ENCODE measurements at regions of chr3 and their contacts with region 1.

Region 1: DNA sequence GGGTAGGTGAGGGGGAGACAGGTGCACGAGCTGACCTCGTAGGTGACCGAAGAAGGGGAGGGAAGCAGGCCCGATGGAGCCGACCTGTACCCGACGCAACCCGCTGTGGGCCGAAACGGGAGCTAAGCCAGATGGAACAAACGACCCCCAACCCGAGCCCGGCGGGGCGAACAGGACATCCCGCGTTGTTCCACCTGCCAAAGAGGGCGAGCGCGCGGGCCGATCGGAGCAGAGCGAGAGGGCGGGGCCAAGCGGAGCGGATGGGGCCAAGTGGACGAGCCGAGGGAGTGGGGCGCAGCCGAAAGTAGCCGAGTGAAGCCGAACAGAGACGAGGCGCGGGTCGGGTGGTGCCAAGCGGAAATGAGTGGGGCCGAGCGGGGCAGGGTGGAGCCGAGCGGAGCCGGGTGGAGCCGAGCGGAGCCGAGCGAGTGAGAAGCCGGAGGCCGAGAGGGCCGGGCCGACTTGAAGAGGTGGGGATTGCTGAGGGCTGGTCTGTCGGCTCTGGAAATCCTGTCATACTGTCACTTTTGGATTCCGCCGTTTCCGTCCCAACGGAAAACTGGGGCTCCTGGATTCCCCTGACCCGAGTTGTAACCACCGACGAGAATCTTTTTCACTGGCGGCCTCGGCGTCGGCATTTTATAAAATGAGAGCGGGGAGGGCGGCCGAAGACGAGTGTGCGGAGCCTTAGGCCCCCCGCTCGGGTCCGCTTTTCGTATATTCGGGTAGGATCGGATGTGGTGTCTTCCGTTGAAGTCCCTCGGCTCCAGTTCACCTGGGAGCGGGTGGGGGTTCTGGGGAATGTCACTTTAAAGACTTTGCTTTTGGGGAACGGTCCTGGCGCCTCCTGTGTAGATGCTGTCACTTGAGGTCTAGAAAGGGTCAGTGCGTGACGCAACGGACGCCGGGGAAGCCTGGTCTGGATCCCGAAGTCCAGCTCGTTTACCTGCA is 15.6 kb upstream of the WNT7A start:
- DNase-seq: peak; percentile 75 to 95
- H3K4me3 ChIP-seq: peak overlapping the region; percentile 96
- H3K27ac ChIP-seq: no peak overlapping the region
- H3K4me1 ChIP-seq: peaks cover 17% of the 10 kb centered on the region
- H3K27me3 ChIP-seq: no peaks in the 10 kb centered on the region
- CTCF ChIP-seq: no peak

Region 2: DNA sequence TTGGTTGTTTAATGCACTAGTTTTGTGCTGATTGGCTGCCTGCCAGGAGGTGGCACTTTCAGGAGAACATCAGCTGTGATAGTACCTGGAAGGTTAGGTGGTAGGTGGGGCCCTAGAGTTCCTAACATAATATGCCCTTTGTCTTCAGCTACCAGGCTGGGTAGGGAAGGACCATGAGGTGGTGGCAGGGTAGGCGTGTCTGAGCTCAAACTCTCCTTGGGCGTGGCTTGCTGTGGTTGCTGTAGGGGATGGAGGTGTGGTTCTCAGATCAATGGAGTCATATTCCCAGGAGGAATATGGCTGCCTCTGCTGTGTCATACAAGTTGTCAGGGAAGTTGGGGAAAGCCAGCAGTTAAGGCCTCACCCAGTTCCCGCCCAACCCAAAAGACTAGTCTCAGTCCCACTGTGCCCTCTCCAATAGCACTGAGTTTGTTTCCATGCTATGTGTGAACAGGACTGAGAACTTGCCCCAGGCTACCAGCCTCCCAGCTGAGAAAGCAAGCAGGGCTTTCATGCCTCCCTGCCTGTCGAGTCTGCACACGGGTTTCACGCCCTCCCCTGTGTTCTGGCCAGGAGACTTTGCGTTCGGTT is 121.5 kb after region 1 on chr3:
- CTCF ChIA-PET with region 1: no interaction called
- POLR2A ChIA-PET with region 1: no interaction called
- intact Hi-C with region 1: loop called (anchors 5 kb)
- DNase-seq: peak; percentile 79 to 88
- H3K4me3 ChIP-seq: no peak overlapping the region
- H3K27ac ChIP-seq: 0 out of 2 replicates have a peak overlapping the region, but pooled peaks have one; percentile 24
- H3K4me1 ChIP-seq: peaks cover 7% of the 10 kb centered on the region; the same call in 1 of the 2 replicates
- H3K27me3 ChIP-seq: no peaks in the 10 kb centered on the region; the same call in 1 of the 2 replicates
- CTCF ChIP-seq: no peak

Region 3: DNA sequence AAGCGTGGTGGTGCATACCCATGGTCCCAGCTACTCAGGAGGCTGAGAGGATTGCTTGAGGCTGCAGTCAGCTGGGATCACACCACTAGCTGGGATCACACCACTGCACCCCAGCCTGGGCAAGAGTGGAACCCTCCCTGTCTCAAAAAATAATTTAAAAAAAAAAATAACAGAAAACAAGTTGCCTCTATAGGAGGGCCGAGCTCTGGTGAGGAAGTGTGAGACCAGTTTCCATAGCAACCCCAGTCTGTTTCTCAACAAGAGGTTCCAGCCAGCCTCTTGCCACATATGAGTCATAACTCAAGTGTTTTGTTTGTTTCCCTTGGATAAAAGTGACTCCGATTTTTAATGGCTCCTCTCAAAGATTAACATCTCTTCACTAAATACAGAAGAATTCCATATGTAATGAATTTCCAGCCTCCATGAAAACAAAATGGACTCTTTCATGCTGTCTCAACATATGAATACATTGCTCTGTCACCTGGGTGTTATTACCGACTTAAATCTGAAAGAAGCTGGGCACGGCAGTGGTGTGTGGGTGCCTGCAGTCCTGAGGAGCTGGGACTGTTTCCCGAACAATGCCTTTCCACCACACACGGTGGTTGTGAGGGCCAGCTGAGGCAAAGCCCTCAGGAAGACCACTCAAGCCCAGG is 249.1 kb after region 1 on chr3:
- CTCF ChIA-PET with region 1: interaction called, 3 read pairs
- POLR2A ChIA-PET with region 1: no interaction called
- intact Hi-C with region 1: loop called (anchors 1 kb)
- DNase-seq: peak; percentile 74 to 96
- H3K4me3 ChIP-seq: peak overlapping the region; percentile 51
- H3K27ac ChIP-seq: peak overlapping the region; percentile 88
- H3K4me1 ChIP-seq: peaks cover 44% of the 10 kb centered on the region
- H3K27me3 ChIP-seq: no peaks in the 10 kb centered on the region
- CTCF ChIP-seq: no peak

Region 4: GRCh38 chr3:14508961-14509795 is 613.7 kb after region 1 on chr3:
- CTCF ChIA-PET with region 1: no interaction called
- POLR2A ChIA-PET with region 1: no interaction called
- intact Hi-C with region 1: loop called (anchors 2 kb)
- DNase-seq: peak; percentile 44 to 68
- H3K4me3 ChIP-seq: no peak overlapping the region
- H3K27ac ChIP-seq: no peak overlapping the region
- H3K4me1 ChIP-seq: 0 out of 2 replicates have a peak, but pooled peaks cover 5% of the 10 kb centered on the region
- H3K27me3 ChIP-seq: 0 out of 2 replicates have a peak, but pooled peaks cover 5% of the 10 kb centered on the region
- CTCF ChIP-seq: peak; percentile 96

Region 5: GRCh38 chr3:14775011-14775410 is 879.6 kb after region 1 on chr3:
- CTCF ChIA-PET with region 1: no interaction called
- POLR2A ChIA-PET with region 1: no interaction called
- intact Hi-C with region 1: loop called (anchors 5 kb)
- DNase-seq: no peak
- H3K4me3 ChIP-seq: no peak overlapping the region
- H3K27ac ChIP-seq: no peak overlapping the region
- H3K4me1 ChIP-seq: no peaks in the 10 kb centered on the region
- H3K27me3 ChIP-seq: no peaks in the 10 kb centered on the region; the same call in 1 of the 2 replicates
- CTCF ChIP-seq: no peak